ENCODE measurements at regions of chr12 and their contacts with region 1.

Region 1: DNA sequence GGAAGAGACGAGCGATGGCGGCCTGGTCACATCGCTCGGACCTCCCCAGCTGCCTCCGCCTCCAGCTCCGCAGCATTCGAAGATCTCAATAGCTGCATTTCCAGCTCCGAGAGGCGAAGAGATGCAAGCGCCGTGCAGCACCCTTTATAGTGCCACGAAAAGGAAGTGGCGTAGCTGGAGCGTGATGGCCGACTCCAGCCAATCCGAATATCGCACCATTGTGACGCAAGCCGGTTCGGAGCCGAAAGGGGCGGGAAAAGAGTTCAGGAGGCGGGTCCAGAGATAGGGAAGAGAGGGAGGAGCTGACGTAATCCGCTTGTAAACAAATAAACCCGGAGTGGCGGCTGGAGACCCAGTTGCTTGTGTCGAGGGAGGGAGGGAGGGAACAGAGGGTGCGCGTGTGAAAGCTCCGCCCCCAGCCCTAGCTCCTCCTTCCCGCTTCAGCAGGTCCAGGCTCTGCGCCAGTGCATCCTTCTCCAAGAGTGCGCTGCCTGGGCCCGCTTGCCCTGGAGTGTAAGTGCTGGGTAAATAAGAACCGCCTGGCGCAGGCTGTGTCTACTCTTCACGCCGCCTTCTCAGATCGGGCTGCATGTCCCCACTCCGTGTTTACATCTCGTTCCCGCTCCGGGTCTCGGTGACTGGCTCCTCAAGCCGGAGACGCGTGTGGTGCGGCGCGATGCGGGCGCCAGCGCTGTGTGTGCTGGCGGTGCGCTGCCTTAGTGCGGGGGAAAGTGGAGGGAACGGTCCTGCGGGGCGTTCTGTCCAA is at the start of gene BTG1:
- DNase-seq: peak; percentile 96 to 100 (median 98)
- ATAC-seq: peak; percentile 72
- H3K4me3 ChIP-seq: peak within 1 kb of the TSS; percentile 91 to 95
- H3K4me3 Mint-ChIP-seq: peak within 1 kb of the TSS; percentile 96
- H3K27ac ChIP-seq: peak within 1 kb of the TSS; percentile 90 to 92
- H3K27ac Mint-ChIP-seq: peak within 1 kb of the TSS; percentile 99
- H3K4me1 ChIP-seq: peaks cover 23% of the 10 kb centered on the region
- H3K4me1 Mint-ChIP-seq: peaks cover 27% of the 10 kb centered on the region
- H3K27me3 ChIP-seq: no peaks in the 10 kb centered on the region
- H3K27me3 Mint-ChIP-seq: no peaks in the 10 kb centered on the region
- CTCF ChIP-seq: no peak
- total RNA-seq, gene BTG1: 1,847 to 1,850 TPM

Region 2: GRCh38 chr12:91382081-91382543 is 763.8 kb before region 1 on chr12:
- CTCF ChIA-PET with region 1: interaction called, 21 read pairs
- POLR2A ChIA-PET with region 1: interaction called, 14 read pairs
- intact Hi-C with region 1: loop called (anchors 2 to 5 kb)
- DNase-seq: peak; percentile 72 to 93 (median 85)
- ATAC-seq: peak; percentile 85
- H3K4me3 ChIP-seq: peak overlapping the region in 1 of 2 experiments; percentile 24
- H3K4me3 Mint-ChIP-seq: peak overlapping the region; percentile 76
- H3K27ac ChIP-seq: no peak overlapping the region
- H3K27ac Mint-ChIP-seq: peak overlapping the region; percentile 80
- H3K4me1 ChIP-seq: peaks cover 4% of the 10 kb centered on the region
- H3K4me1 Mint-ChIP-seq: peaks cover 10% of the 10 kb centered on the region
- H3K27me3 ChIP-seq: peaks cover 0 to 2% of the 10 kb centered on the region in 2 experiments
- H3K27me3 Mint-ChIP-seq: peaks cover 2% of the 10 kb centered on the region
- CTCF ChIP-seq: peak; percentile 84

Region 3: DNA sequence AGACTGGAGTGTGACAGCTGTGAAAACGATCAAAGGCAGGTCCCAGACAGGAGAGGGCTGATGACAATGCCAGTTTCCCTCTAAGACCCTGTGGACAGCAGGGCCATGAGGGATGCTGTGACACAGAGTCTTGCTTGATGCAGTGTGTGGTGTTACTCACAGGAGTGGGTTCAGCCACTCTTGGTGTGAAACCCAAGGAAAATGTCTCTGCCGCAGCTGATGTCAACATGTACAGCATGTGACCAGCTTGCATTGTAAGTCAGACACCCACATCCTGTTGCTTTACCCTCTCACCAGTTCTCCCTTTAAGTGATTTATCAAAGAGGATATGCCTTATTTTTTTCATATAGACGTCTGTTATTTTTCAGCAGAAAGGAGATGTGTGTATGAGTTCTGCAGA is 268.9 kb before region 1 on chr12:
- CTCF ChIA-PET with region 1: interaction called, 4 read pairs
- POLR2A ChIA-PET with region 1: interaction called, 85 read pairs
- intact Hi-C with region 1: loop called (anchors 1 to 2 kb)
- DNase-seq: peak; percentile 75 to 99 (median 86)
- ATAC-seq: peak; percentile 89
- H3K4me3 ChIP-seq: peak overlapping the region; percentile 16 to 29
- H3K4me3 Mint-ChIP-seq: peak overlapping the region; percentile 72
- H3K27ac ChIP-seq: peak overlapping the region; percentile 80 to 96
- H3K27ac Mint-ChIP-seq: peak overlapping the region; percentile 97
- H3K4me1 ChIP-seq: peaks cover 75% of the 10 kb centered on the region
- H3K4me1 Mint-ChIP-seq: peaks cover 74% of the 10 kb centered on the region
- H3K27me3 ChIP-seq: no peaks in the 10 kb centered on the region
- H3K27me3 Mint-ChIP-seq: no peaks in the 10 kb centered on the region
- CTCF ChIP-seq: no peak

Region 4: GRCh38 chr12:92034858-92035401 is 111.0 kb before region 1 on chr12:
- CTCF ChIA-PET with region 1: interaction called, 31 read pairs
- POLR2A ChIA-PET with region 1: interaction called, 150 read pairs
- intact Hi-C with region 1: loop called (anchors 2 to 5 kb)
- DNase-seq: peak; percentile 12 to 84 (median 63)
- ATAC-seq: peak; percentile 57
- H3K4me3 ChIP-seq: peak overlapping the region; percentile 38 to 41
- H3K4me3 Mint-ChIP-seq: peak overlapping the region; percentile 86
- H3K27ac ChIP-seq: peak overlapping the region; percentile 61 to 83
- H3K27ac Mint-ChIP-seq: peak overlapping the region; percentile 98
- H3K4me1 ChIP-seq: peaks cover 84% of the 10 kb centered on the region
- H3K4me1 Mint-ChIP-seq: peaks cover 96% of the 10 kb centered on the region
- H3K27me3 ChIP-seq: no peaks in the 10 kb centered on the region
- H3K27me3 Mint-ChIP-seq: no peaks in the 10 kb centered on the region
- CTCF ChIP-seq: no peak

Region 5: DNA sequence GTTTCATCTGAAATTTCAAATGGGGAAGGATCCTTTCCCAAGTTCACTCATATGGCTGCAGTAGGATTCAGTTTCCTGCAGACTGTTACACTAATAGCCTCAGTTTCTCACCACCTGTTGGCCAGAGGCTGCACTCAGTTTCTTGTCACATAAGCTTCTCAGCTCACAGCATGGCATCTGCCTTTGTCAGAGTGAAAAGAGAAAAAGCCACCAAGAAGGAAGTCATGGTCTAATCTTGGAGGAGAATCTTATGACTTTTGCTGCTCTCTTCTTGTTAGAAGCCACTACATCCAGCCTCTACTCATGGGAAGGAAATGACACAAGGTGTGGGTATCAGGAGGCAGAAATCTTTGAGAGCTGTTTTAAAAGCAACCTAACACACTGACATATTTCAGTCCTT is 39.1 kb after region 1 on chr12:
- CTCF ChIA-PET with region 1: no interaction called
- POLR2A ChIA-PET with region 1: interaction called, 12 read pairs
- intact Hi-C with region 1: no loop called
- DNase-seq: peak in 4 of 9 experiments; percentile 8 to 72 (median 32)
- ATAC-seq: peak; percentile 87
- H3K4me3 ChIP-seq: no peak overlapping the region
- H3K4me3 Mint-ChIP-seq: peak overlapping the region; percentile 62
- H3K27ac ChIP-seq: peak overlapping the region in 1 of 2 experiments; percentile 43
- H3K27ac Mint-ChIP-seq: peak overlapping the region; percentile 90
- H3K4me1 ChIP-seq: peaks cover 24% of the 10 kb centered on the region
- H3K4me1 Mint-ChIP-seq: peaks cover 47% of the 10 kb centered on the region
- H3K27me3 ChIP-seq: no peaks in the 10 kb centered on the region
- H3K27me3 Mint-ChIP-seq: no peaks in the 10 kb centered on the region
- CTCF ChIP-seq: no peak

Region 6: GRCh38 chr12:92408072-92408900 is 262.4 kb after region 1 on chr12:
- CTCF ChIA-PET with region 1: interaction called, 11 read pairs
- POLR2A ChIA-PET with region 1: interaction called, 185 read pairs
- intact Hi-C with region 1: loop called (anchors 1 to 2 kb)
- DNase-seq: peak in 5 of 9 experiments; percentile 12 to 74 (median 39)
- ATAC-seq: peak; percentile 26
- H3K4me3 ChIP-seq: no peak overlapping the region
- H3K4me3 Mint-ChIP-seq: no peak overlapping the region
- H3K27ac ChIP-seq: no peak overlapping the region
- H3K27ac Mint-ChIP-seq: peak overlapping the region; percentile 55
- H3K4me1 ChIP-seq: peaks cover 30% of the 10 kb centered on the region
- H3K4me1 Mint-ChIP-seq: peaks cover 55% of the 10 kb centered on the region
- H3K27me3 ChIP-seq: no peaks in the 10 kb centered on the region
- H3K27me3 Mint-ChIP-seq: no peaks in the 10 kb centered on the region
- CTCF ChIP-seq: peak; percentile 54

Region 7: DNA sequence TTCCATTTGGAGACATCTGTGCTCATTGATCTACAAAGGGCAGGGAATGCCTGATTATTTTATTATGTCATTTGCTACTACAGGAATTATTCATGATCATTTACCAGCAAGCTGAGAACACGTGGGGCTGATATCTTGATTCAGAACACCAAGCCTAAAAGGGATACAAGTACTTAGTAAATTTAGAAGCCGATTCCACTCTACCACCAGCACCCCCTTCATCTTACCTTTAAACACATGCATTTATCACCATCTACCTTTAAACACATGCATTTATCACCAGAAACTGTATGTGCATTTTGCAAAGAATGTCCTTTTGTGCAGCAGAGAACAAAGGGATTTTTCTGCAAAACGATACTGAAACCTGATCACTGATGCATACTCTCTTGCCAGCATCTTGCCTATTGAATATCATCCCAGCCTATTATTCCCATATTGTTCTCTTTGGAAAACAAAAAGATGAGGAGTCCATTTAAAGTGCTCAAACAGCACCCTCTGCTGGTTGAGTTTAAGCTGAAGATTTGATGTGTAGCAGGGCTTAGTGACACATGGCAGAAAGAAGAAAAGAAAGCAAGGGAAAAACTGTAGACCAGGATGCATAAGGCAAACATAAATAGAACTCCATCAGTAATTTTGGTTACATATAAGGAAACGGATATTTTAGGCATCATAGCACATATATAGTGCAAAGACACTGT is 424.3 kb after region 1 on chr12:
- CTCF ChIA-PET with region 1: interaction called, 38 read pairs
- POLR2A ChIA-PET with region 1: interaction called, 29 read pairs
- intact Hi-C with region 1: loop called (anchors 1 to 2 kb)
- DNase-seq: peak in 7 of 9 experiments; percentile 25 to 83 (median 45)
- ATAC-seq: peak; percentile 93
- H3K4me3 ChIP-seq: peak overlapping the region in 1 of 2 experiments; percentile 30
- H3K4me3 Mint-ChIP-seq: no peak overlapping the region
- H3K27ac ChIP-seq: no peak overlapping the region
- H3K27ac Mint-ChIP-seq: no peak overlapping the region
- H3K4me1 ChIP-seq: peaks cover 22% of the 10 kb centered on the region
- H3K4me1 Mint-ChIP-seq: peaks cover 6% of the 10 kb centered on the region
- H3K27me3 ChIP-seq: no peaks in the 10 kb centered on the region
- H3K27me3 Mint-ChIP-seq: no peaks in the 10 kb centered on the region
- CTCF ChIP-seq: peak; percentile 98

Measured in CD8-positive, alpha-beta T cell (primary cell).